ENCODE measurements at regions of chr11 and their contacts with region 1.

Region 1: GRCh38 chr11:7986768-7987559 is at the start of gene EIF3F:
- DNase-seq: peak; percentile 94 to 96
- H3K4me3 ChIP-seq: peak within 1 kb of the TSS; percentile 70
- H3K4me3 Mint-ChIP-seq: peak within 1 kb of the TSS; percentile 95
- H3K27ac Mint-ChIP-seq: peak within 1 kb of the TSS; percentile 94
- H3K4me1 ChIP-seq: peaks cover 10% of the 10 kb centered on the region
- H3K4me1 Mint-ChIP-seq: peaks cover 11% of the 10 kb centered on the region
- H3K27me3 ChIP-seq: no peaks in the 10 kb centered on the region
- H3K27me3 Mint-ChIP-seq: no peaks in the 10 kb centered on the region
- CTCF ChIP-seq: peak; percentile 77 to 78
- total RNA-seq, gene EIF3F: 289 and 315 TPM in 2 replicates

Region 2: DNA sequence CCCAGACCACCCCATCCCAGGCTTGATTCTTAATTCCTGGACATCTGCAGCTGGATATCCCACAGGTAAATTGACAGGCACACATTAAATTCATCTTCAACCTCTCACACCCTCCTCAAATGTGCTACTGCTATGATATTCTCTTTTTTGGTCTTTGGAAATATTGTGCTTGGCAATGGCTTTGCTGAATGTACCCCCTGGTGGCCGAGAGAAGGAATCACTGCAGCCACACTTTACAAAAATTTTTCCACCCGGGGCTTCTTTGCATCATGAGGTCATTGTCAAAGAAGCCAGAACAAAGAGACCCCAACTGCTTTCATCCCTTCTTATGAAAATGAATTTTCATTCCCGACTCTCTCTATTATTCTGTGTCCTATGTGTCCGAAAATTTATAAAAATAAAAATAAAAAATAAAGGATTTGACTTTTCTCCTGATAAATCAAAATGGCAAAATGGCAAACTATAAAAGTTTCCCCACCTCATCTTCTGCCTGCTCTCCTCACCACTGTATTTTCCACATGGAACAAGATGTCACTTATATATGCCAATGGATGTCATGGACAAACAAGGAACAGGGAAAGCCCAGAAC is 298.6 kb before region 1 on chr11:
- CTCF ChIA-PET with region 1: no interaction called
- POLR2A ChIA-PET with region 1: no interaction called
- intact Hi-C with region 1: loop called (anchors 1 kb)
- DNase-seq: peak in 1 of 2 experiments; percentile 49
- H3K4me3 ChIP-seq: no peak overlapping the region
- H3K4me3 Mint-ChIP-seq: no peak overlapping the region
- H3K27ac Mint-ChIP-seq: no peak overlapping the region
- H3K4me1 ChIP-seq: peaks cover 15% of the 10 kb centered on the region
- H3K4me1 Mint-ChIP-seq: peaks cover 20% of the 10 kb centered on the region
- H3K27me3 ChIP-seq: no peaks in the 10 kb centered on the region
- H3K27me3 Mint-ChIP-seq: no peaks in the 10 kb centered on the region
- CTCF ChIP-seq: peak; percentile 83 to 91

Region 3: GRCh38 chr11:7892840-7893254 is 94.1 kb before region 1 on chr11:
- CTCF ChIA-PET with region 1: interaction called, 47 read pairs
- POLR2A ChIA-PET with region 1: interaction called, 7 read pairs
- intact Hi-C with region 1: loop called (anchors 1 kb)
- DNase-seq: peak in 1 of 2 experiments; percentile 50
- H3K4me3 ChIP-seq: no peak overlapping the region
- H3K4me3 Mint-ChIP-seq: no peak overlapping the region
- H3K27ac Mint-ChIP-seq: no peak overlapping the region
- H3K4me1 ChIP-seq: peaks cover 9% of the 10 kb centered on the region; the same call in 1 of the 2 replicates
- H3K4me1 Mint-ChIP-seq: no peaks in the 10 kb centered on the region
- H3K27me3 ChIP-seq: no peaks in the 10 kb centered on the region
- H3K27me3 Mint-ChIP-seq: peaks cover 3% of the 10 kb centered on the region
- CTCF ChIP-seq: peak; percentile 65 to 77

Region 4: DNA sequence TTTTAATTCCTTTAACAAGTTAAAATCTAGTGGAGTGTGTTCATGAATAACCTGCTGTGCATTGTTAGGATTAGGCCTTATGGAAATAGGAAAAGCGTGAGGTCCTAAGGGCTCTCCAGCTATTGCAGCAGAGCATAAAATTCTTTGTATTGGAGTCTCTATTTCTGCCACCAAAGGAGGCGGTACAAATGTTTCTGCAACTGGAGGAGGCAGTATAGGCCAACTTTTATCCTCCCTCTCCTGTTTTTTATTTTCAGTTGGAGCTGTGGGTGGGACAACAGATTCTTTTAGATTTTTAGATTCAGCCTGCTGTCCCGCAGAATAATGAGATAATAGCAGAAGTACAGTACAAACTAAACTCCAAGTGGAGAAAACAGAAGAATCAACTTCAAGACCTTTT is 82.0 kb before region 1 on chr11:
- CTCF ChIA-PET with region 1: interaction called, 24 read pairs
- POLR2A ChIA-PET with region 1: interaction called, 17 read pairs
- intact Hi-C with region 1: loop called (anchors 1 kb)
- DNase-seq: no peak
- H3K4me3 ChIP-seq: no peak overlapping the region
- H3K4me3 Mint-ChIP-seq: peak overlapping the region; percentile 28
- H3K27ac Mint-ChIP-seq: no peak overlapping the region
- H3K4me1 ChIP-seq: peaks cover 41% of the 10 kb centered on the region
- H3K4me1 Mint-ChIP-seq: peaks cover 6% of the 10 kb centered on the region
- H3K27me3 ChIP-seq: no peaks in the 10 kb centered on the region
- H3K27me3 Mint-ChIP-seq: no peaks in the 10 kb centered on the region
- CTCF ChIP-seq: no peak

Measured in Caco-2 (cell line).